ENCODE measurements at regions of chr16 and their contacts with region 1.

Region 1: GRCh38 chr16:83698964-83699363 is 108.8 kb upstream of the HSBP1 start:
- DNase-seq: no peak
- H3K4me3 ChIP-seq: no peak overlapping the region
- H3K27ac ChIP-seq: no peak overlapping the region
- H3K4me1 ChIP-seq: no peaks in the 10 kb centered on the region
- H3K27me3 ChIP-seq: no peaks in the 10 kb centered on the region
- CTCF ChIP-seq: no peak
- EP300 ChIP-seq: no peak
- POLR2A ChIP-seq: no peak

Region 2: GRCh38 chr16:81964808-81965207 is 1734.2 kb before region 1 on chr16:
- intact Hi-C with region 1: loop called (anchors 5 kb)
- DNase-seq: no peak
- H3K4me3 ChIP-seq: no peak overlapping the region
- H3K27ac ChIP-seq: no peak overlapping the region
- H3K4me1 ChIP-seq: no peaks in the 10 kb centered on the region
- H3K27me3 ChIP-seq: no peaks in the 10 kb centered on the region
- CTCF ChIP-seq: no peak
- EP300 ChIP-seq: no peak
- POLR2A ChIP-seq: no peak